ENCODE measurements at regions of chr11 and their contacts with region 1.

Region 1: DNA sequence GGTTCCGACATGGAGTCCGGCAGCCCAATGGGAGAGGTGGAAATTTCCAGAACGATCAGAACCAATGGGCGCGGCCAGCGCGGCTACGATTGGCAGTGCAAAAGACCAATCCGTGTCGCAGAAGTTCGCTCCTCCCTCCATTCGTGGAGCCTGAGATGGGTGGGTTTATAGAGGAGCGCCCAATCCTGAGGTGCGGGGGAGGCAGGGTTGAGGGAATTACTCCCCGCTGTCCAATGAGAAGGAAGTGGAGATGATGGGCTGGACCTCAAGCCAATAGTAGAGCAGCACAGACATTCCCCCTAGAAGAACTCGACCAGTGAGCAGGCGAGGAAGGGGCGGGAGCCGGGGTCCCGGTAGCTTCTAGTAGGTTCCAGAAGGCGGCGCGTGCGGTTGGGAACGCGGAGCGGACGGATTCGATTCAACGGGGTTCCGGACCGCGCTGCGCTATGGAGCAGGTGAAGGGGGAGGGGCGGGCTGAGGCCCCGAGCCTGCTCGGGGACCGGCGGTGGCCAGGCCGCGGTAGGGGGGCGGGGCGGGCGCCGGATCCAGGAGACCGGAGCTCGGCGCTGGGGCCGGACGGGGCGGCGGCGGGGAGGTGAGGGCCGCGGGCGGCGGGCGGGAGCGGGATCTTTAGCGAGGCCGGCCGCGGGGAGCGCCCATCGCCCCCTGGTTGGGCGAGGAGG is at the start of gene STIP1:
- DNase-seq: peak; percentile 98
- ATAC-seq: peak; percentile 92
- H3K4me3 Mint-ChIP-seq: peak within 1 kb of the TSS; percentile 93
- H3K27ac Mint-ChIP-seq: peak within 1 kb of the TSS; percentile 96
- H3K4me1 Mint-ChIP-seq: peaks cover 37% of the 10 kb centered on the region
- H3K27me3 Mint-ChIP-seq: no peaks in the 10 kb centered on the region
- CTCF ChIP-seq: no peak
- total RNA-seq, gene STIP1: 291 to 296 TPM (median 296 TPM) in 3 replicates

Region 2: GRCh38 chr11:64088162-64089026 is 97.6 kb before region 1 on chr11:
- CTCF ChIA-PET with region 1: no interaction called
- POLR2A ChIA-PET with region 1: no interaction called
- DNase-seq: peak; percentile 79
- ATAC-seq: peak; percentile 93
- H3K4me3 Mint-ChIP-seq: no peak overlapping the region
- H3K27ac Mint-ChIP-seq: no peak overlapping the region
- H3K4me1 Mint-ChIP-seq: peaks cover 21% of the 10 kb centered on the region
- H3K27me3 Mint-ChIP-seq: peaks cover 32% of the 10 kb centered on the region
- CTCF ChIP-seq: no peak

Region 3: DNA sequence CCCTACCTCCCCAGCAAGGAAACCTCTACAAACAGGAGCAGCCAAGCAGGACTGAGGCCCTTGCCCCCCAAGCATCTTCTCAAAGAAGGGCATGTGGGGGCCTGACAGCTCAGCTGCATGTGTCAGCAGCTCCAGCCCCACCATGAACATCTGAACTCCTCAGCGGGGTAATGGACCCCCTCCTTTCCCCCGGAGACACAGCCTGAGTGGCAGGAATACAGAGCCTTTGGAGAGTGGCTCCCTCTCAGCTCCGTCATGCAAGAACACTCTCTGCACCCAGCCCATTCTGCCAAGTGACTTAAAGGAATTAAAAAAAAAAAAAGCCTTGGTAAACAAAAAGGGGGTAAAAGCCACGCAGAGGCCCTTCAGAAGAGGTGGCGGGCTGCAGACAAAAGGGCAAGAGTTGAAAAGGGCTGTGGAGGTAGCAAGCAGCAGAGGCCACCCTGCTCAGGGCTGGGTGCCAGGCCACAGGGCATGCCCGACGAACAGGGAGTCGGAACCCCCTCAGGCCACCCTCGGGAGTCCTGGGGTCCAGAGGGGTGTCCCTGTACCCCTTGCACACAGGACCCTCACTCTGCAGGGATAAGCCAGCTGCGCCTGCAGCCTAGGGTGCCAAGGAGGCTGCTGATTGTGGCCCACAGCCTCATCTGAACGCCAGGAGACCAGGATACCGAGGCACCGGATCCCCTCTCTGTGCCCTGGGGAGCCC is 82.5 kb before region 1 on chr11:
- CTCF ChIA-PET with region 1: no interaction called
- POLR2A ChIA-PET with region 1: no interaction called
- DNase-seq: no peak
- ATAC-seq: no peak
- H3K4me3 Mint-ChIP-seq: no peak overlapping the region
- H3K27ac Mint-ChIP-seq: no peak overlapping the region
- H3K4me1 Mint-ChIP-seq: peaks cover 7% of the 10 kb centered on the region
- H3K27me3 Mint-ChIP-seq: peaks cover 73% of the 10 kb centered on the region
- CTCF ChIP-seq: no peak

Region 4: DNA sequence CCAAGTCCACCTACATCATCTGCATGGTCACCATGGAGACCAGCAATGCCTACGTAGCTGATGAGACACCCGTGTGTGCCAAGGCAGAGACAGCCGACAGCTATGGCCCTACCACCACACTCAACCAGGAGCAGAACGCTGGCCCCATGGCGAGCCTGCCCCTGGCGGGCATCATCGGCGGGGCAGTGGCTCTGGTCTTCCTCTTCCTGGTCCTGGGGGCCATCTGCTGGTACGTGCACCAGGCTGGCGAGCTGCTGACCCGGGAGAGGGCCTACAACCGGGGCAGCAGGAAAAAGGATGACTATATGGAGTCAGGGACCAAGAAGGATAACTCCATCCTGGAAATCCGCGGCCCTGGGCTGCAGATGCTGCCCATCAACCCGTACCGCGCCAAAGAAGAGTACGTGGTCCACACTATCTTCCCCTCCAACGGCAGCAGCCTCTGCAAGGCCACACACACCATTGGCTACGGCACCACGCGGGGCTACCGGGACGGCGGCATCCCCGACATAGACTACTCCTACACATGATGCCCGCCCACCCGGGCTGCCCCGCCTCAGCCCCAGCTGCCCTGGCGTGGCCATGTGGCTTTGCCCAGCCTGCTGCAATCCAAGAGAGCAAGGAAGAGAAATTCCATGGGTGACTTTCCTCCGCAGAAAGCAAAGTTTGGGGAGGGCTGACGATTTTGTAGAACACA is 68.0 kb before region 1 on chr11:
- CTCF ChIA-PET with region 1: no interaction called
- POLR2A ChIA-PET with region 1: no interaction called
- DNase-seq: no peak
- ATAC-seq: no peak
- H3K4me3 Mint-ChIP-seq: no peak overlapping the region
- H3K27ac Mint-ChIP-seq: no peak overlapping the region
- H3K4me1 Mint-ChIP-seq: peaks cover 31% of the 10 kb centered on the region
- H3K27me3 Mint-ChIP-seq: peaks cover 42% of the 10 kb centered on the region
- CTCF ChIP-seq: no peak

Region 5: GRCh38 chr11:64165849-64166635 is 19.9 kb before region 1 on chr11 and contains the start of gene MACROD1:
- CTCF ChIA-PET with region 1: interaction called, 11 read pairs
- POLR2A ChIA-PET with region 1: interaction called, 11 read pairs
- DNase-seq: peak; percentile 80
- ATAC-seq: peak; percentile 77
- H3K4me3 Mint-ChIP-seq: peak within 1 kb of the TSS; percentile 74
- H3K27ac Mint-ChIP-seq: peak within 1 kb of the TSS; percentile 86
- H3K4me1 Mint-ChIP-seq: peaks cover 22% of the 10 kb centered on the region
- H3K27me3 Mint-ChIP-seq: no peaks in the 10 kb centered on the region
- CTCF ChIP-seq: no peak
- total RNA-seq, gene MACROD1: 36.9 to 54.4 TPM (median 52.9 TPM) in 3 replicates

Region 6: DNA sequence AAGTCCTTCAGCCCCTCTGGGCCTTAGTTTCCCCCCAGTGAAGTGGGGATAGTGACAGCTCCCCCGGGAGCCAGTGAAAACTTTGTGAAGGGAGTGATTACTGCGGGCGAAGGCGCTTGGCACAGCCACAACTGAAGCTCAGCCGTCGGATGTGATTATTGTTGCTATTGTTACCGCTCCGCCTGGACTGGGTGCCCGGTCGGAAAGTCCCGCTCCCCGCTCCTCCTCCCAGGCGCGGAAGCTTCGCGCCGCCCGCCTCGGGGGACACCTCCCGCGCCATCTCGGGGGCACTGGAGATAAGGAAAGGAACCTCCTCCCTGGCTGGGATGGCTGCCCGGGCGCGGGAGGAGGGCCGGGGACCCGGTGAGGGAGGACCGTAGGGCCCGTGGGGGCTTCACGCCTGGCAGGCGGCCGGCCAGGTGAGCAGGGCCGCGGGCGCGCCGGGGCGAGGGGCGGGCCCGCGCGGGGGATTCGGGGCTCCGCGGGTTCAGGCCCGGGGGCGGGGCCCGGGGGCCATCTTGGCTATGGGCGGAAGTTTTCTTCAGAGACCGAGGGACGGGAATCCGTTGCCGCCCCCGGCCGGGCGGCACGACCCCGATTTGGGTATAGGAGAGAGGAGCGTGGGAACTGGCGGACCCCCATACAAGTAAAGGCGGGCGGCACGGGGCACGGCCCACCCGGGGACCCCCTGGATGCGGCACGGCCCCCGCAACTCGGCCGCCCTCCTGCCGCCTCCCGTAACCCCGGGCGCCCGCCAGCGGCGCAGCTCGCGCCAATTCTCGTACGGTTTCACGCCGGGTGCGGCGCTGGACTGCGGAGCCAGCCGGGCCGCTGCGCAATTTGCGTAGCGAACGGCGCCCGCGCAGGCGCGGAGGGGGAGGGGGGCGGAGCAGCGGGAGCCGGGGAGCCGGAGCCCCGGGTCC is 99.3 kb after region 1 on chr11 and contains the start of gene GPR137:
- CTCF ChIA-PET with region 1: no interaction called
- POLR2A ChIA-PET with region 1: no interaction called
- DNase-seq: peak; percentile 78
- ATAC-seq: peak; percentile 15
- H3K4me3 Mint-ChIP-seq: peak within 1 kb of the TSS; percentile 80
- H3K27ac Mint-ChIP-seq: no peak within 1 kb of the TSS; the same call in 1 of the 2 replicates
- H3K4me1 Mint-ChIP-seq: peaks cover 8% of the 10 kb centered on the region
- H3K27me3 Mint-ChIP-seq: peaks cover 17% of the 10 kb centered on the region
- CTCF ChIP-seq: no peak
- total RNA-seq, gene GPR137: 51.1 to 53.8 TPM (median 51.8 TPM) in 3 replicates

Measured in WTC11 (cell line).